K562 (cell line): ENCODE measurements at regions of chr3 and their contacts with region 1.

Region 1: DNA sequence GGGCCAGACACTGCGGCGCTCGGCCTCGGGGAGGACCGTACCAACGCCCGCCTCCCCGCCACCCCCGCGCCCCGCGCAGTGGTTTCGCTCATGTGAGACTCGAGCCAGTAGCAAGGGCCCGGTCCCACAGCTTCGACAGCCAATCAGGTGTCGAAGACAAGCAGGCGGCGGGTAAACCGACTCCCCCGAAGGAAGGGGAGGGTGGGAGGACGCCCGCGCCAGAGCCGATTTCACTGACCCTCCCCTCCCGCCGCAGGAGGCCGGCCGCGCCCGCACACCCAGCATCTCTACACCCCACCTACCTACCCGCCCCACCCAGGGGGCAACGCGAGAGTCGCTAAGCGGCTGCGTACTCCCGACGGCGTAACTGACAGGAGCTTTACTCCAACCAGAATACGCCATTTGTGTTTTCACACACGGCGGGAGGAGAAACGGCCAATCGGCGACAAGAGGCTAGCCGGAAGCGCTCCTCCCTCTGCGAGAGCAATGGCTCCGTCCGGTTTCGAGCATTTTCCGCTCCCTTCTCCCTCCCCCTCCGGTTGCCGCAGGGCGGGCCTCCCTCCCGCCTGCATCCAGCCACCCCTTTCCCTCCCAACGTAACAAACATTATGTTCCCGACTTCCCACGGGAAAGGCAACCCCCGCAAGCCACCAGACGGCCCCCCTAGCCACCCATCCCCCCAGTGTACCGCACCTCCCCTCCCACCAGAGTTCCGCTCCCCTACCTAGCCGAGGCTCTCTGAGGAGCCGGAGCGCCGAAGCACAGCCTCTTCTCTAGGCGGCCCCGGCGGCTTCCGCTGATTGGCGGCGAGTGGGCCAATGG is 504 bp upstream of the SETD5 start:
- DNase-seq: peak; percentile 92 to 100 (median 96)
- ATAC-seq: peak; percentile 80
- H3K4me3 ChIP-seq: peak overlapping the region; percentile 74
- H3K27ac ChIP-seq: peak overlapping the region; percentile 96
- H3K4me1 ChIP-seq: peaks cover 0 to 30% of the 10 kb centered on the region in 2 experiments; a peak in 4 of 5 replicates
- H3K27me3 ChIP-seq: no peaks in the 10 kb centered on the region
- CTCF ChIP-seq: no peak; a peak in 2 of 6 replicates
- EP300 ChIP-seq: peak; percentile 31
- POLR2A ChIP-seq: peak; percentile 97
- RAD21 ChIP-seq: no peak

Region 2: GRCh38 chr3:9255976-9256375 is 140.9 kb before region 1 on chr3:
- CTCF ChIA-PET with region 1: no interaction called
- POLR2A ChIA-PET with region 1: no interaction called
- in situ Hi-C with region 1: no loop called
- intact Hi-C with region 1: no loop called
- DNase-seq: no peak
- ATAC-seq: no peak
- H3K4me3 ChIP-seq: no peak overlapping the region
- H3K27ac ChIP-seq: no peak overlapping the region
- H3K4me1 ChIP-seq: no peaks in the 10 kb centered on the region
- H3K27me3 ChIP-seq: peaks cover 6 to 54% of the 10 kb centered on the region in 2 experiments; a peak in 3 of 5 replicates
- CTCF ChIP-seq: no peak
- EP300 ChIP-seq: no peak
- POLR2A ChIP-seq: no peak
- RAD21 ChIP-seq: no peak

Region 3: DNA sequence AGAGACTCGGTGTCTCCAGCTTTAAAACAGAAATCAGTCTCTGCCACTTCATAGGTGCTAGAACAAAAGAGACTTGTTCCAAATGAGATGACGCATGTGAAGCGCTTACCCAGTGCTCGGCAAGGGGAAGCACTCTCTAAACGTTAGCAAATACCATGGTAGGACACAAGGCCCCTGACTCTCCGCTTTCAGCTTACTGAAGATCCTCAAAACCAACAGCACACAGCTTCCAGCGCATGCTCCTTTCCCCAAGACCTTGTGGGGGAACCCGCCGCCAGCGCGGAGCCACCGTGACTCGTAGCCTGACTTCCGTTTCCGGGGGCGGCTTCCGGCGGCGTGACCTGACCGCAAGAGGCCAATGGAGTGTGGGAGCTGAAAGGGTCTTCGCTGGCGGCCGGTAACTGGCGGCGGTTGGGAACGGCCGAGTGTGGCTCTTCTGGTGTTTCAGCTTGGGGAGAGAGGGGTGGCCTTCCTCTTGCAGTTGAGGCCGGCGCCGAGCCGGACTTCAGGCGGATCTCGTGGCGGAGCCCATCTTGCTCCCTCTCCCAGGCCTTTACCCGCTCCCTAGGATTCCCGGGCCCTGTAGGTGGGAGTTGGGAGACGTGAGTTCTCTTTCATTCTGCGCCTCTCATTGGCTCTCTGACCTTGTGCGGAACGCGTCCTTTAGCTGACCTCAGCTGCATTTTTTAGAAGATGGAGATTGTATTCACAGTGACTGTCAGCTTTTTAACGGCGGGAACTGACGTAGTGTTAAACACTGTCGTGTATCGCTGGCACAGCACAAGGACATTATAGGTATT is 34.0 kb before region 1 on chr3 and contains the start of gene THUMPD3:
- CTCF ChIA-PET with region 1: no interaction called
- POLR2A ChIA-PET with region 1: interaction called, 104 read pairs
- in situ Hi-C with region 1: no loop called
- intact Hi-C with region 1: loop called (anchors 2 kb)
- DNase-seq: peak; percentile 91 to 98 (median 92)
- ATAC-seq: peak; percentile 96
- H3K4me3 ChIP-seq: peak within 1 kb of the TSS; percentile 63
- H3K27ac ChIP-seq: peak within 1 kb of the TSS; percentile 94
- H3K4me1 ChIP-seq: peaks cover 4 to 13% of the 10 kb centered on the region in 2 experiments; a peak in 4 of 5 replicates
- H3K27me3 ChIP-seq: no peaks in the 10 kb centered on the region
- CTCF ChIP-seq: peak in 2 of 3 experiments; percentile 8 to 27; a peak in 2 of 6 replicates
- EP300 ChIP-seq: peak; percentile 51
- POLR2A ChIP-seq: peak; percentile 99
- RAD21 ChIP-seq: no peak
- polyA plus RNA-seq, gene THUMPD3: 58.3 to 78.1 TPM

Region 4: DNA sequence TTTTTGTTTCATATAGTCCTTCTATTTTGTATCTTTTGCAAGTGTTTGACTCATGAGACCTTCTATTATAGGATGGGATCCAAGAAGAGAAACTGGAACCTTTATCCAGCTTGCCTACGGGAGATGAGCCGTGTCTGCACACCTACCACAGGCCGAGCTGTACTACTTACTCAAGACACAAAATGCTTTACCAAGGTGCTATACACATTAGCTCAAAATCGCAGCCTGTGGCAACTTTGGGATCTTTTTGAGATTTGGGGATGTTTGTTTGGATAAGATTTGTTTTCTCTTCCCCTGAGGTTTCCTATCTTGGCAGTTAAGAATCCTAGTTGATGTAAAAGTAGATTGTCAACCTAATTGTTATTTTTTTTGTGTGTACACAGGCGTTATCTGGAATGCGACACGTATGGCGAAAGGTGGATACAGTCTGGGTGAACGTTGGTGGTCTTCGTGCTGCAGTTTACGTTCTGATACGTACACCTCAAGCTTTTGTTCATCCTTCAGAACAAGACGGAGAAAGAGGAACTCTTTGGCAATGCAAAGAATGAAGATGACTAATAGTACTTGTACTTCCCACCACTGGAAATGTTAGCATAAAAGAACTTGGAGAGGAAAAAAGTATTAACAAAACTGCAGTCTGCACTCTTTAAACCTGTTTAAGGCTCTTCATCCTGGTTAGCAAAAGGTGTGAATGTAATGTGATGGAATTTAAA is 12.6 kb before region 1 on chr3:
- CTCF ChIA-PET with region 1: no interaction called
- POLR2A ChIA-PET with region 1: interaction called, 83 read pairs
- in situ Hi-C with region 1: no loop called
- intact Hi-C with region 1: no loop called
- DNase-seq: no peak
- ATAC-seq: no peak
- H3K4me3 ChIP-seq: no peak overlapping the region
- H3K27ac ChIP-seq: no peak overlapping the region
- H3K4me1 ChIP-seq: no peaks in the 10 kb centered on the region
- H3K27me3 ChIP-seq: no peaks in the 10 kb centered on the region
- CTCF ChIP-seq: no peak
- EP300 ChIP-seq: no peak
- POLR2A ChIP-seq: no peak; the same call in 1 of the 2 replicates
- RAD21 ChIP-seq: no peak

Region 5: GRCh38 chr3:9416139-9416780 is 19.3 kb after region 1 on chr3:
- CTCF ChIA-PET with region 1: no interaction called
- POLR2A ChIA-PET with region 1: interaction called, 150 read pairs
- in situ Hi-C with region 1: no loop called
- intact Hi-C with region 1: no loop called
- DNase-seq: no peak
- ATAC-seq: peak; percentile 11
- H3K4me3 ChIP-seq: no peak overlapping the region
- H3K27ac ChIP-seq: peak overlapping the region; percentile 11; the same call in 1 of the 3 replicates
- H3K4me1 ChIP-seq: peaks cover 4 to 34% of the 10 kb centered on the region in 2 experiments
- H3K27me3 ChIP-seq: no peaks in the 10 kb centered on the region
- CTCF ChIP-seq: no peak
- EP300 ChIP-seq: peak; percentile 34; the same call in 1 of the 2 replicates
- POLR2A ChIP-seq: no peak
- RAD21 ChIP-seq: no peak

Region 6: GRCh38 chr3:9435316-9435715 is 38.4 kb after region 1 on chr3:
- CTCF ChIA-PET with region 1: no interaction called
- POLR2A ChIA-PET with region 1: interaction called, 11 read pairs
- in situ Hi-C with region 1: no loop called
- intact Hi-C with region 1: no loop called
- DNase-seq: no peak
- ATAC-seq: no peak
- H3K4me3 ChIP-seq: no peak overlapping the region
- H3K27ac ChIP-seq: no peak overlapping the region
- H3K4me1 ChIP-seq: no peaks in the 10 kb centered on the region
- H3K27me3 ChIP-seq: no peaks in the 10 kb centered on the region
- CTCF ChIP-seq: no peak
- EP300 ChIP-seq: no peak
- POLR2A ChIP-seq: no peak
- RAD21 ChIP-seq: no peak

Region 7: DNA sequence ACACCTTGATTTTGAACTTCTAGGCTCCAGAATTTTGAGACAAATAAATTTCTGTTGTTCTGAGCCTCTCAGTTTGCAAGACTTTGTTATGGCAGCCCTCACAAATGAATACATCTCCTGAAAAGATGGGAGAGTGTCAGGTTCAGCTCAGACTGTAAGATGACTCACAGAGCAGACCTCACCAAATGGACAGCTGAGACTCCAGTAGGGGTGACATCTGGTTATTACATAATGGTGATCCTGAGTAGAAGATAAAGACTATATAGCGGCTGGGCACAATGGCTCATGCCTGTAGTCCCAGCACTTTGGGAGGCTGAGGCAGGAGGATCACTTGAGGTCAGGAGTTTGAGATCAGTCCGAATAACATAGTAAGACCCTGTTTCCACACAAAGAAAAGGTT is 226.2 kb after region 1 on chr3:
- CTCF ChIA-PET with region 1: no interaction called
- POLR2A ChIA-PET with region 1: no interaction called
- in situ Hi-C with region 1: no loop called
- intact Hi-C with region 1: no loop called
- DNase-seq: peak in 1 of 4 experiments; percentile 32
- ATAC-seq: peak; percentile 74
- H3K4me3 ChIP-seq: no peak overlapping the region
- H3K27ac ChIP-seq: no peak overlapping the region
- H3K4me1 ChIP-seq: no peaks in the 10 kb centered on the region
- H3K27me3 ChIP-seq: peaks cover 0 to 11% of the 10 kb centered on the region in 2 experiments; a peak in 4 of 5 replicates
- CTCF ChIP-seq: no peak
- EP300 ChIP-seq: no peak
- POLR2A ChIP-seq: no peak
- RAD21 ChIP-seq: no peak

Region 8: GRCh38 chr3:9899289-9899791 is 502.4 kb after region 1 on chr3:
- CTCF ChIA-PET with region 1: no interaction called
- POLR2A ChIA-PET with region 1: no interaction called
- in situ Hi-C with region 1: no loop called
- intact Hi-C with region 1: no loop called
- DNase-seq: no peak
- ATAC-seq: no peak
- H3K4me3 ChIP-seq: no peak overlapping the region
- H3K27ac ChIP-seq: no peak overlapping the region
- H3K4me1 ChIP-seq: peaks cover 38 to 48% of the 10 kb centered on the region in 2 experiments
- H3K27me3 ChIP-seq: no peaks in the 10 kb centered on the region
- CTCF ChIP-seq: no peak
- EP300 ChIP-seq: no peak
- POLR2A ChIP-seq: no peak
- RAD21 ChIP-seq: no peak

Region 9: DNA sequence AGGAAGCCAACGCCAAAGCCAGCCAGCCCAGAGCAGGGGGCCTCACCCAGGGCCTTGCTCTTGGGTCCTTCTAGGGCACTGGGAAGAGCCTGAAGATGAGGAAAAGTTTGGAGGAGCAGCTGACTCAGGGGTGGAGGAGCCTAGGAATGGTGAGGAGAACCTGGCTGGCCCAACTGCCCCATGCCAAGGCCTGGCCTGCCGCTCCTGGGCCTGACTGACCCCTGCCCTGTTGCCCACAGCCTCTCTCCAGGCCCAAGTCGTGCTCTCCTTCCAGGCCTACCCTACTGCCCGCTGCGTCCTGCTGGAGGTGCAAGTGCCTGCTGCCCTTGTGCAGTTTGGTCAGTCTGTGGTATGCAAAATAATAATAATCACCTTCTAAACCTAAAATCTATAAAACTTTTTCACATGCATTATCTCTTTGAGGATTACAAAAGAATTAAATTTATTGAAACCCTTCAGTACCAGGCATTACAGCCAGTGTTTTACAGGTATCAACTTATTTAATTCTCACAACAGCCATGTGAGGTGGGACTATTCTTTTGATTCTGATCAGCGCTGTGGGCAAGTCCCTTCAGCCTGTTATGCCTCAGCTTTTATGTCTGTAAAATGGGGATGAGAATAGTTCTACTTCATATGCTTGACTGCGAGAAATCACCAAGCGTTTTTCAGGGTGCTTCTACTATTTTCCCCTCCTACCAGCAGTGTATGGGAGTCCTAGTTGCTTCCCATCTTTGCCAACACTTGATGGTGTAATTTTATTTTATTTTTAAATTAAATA is 521.5 kb after region 1 on chr3:
- CTCF ChIA-PET with region 1: no interaction called
- POLR2A ChIA-PET with region 1: no interaction called
- in situ Hi-C with region 1: no loop called
- intact Hi-C with region 1: no loop called
- DNase-seq: no peak
- ATAC-seq: no peak
- H3K4me3 ChIP-seq: no peak overlapping the region
- H3K27ac ChIP-seq: no peak overlapping the region
- H3K4me1 ChIP-seq: peaks cover 13 to 34% of the 10 kb centered on the region in 2 experiments
- H3K27me3 ChIP-seq: no peaks in the 10 kb centered on the region
- CTCF ChIP-seq: no peak
- EP300 ChIP-seq: no peak
- POLR2A ChIP-seq: no peak
- RAD21 ChIP-seq: no peak